Heart left ventricle (tissue), 16 donors: ENCODE measurements at regions of chr20 and their contacts with region 1.

Region 1: DNA sequence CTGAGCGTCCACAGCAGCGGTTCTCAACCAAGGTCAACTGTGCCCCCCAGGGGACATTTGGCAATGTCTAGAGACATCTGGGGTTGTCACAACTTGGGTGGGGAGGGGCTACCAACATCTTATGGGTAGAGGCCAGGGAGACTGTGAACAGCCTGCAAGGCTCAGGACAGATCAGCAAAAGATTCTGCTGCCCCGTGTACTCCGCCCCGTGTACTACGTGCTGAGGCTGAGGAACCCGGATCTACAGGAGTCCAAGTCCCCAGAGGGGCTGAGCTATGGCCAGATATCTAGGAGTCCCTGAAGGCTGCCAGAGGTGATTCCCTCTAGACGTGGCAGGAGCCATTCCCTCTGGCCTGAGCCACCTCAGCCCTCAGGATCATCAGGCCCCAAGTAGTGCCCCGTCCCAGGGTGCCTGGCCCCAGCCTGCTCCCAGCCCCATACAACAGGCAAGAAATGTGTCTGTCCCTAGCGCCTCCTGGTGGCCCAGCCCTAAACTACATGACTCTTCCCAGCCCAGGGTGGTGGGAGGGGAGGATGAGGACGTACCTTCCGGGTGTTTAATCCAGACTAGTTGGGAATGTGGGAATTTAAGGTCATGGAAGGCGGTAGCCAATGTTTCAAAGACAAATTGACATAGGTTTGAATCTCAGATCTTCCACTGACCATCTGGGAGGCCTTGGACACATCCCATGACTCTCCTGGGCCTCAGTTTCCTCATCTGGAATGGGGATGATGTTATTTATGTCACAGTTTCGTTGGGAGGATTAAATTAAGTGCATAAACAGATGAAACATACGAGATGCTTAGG is 49.5 kb upstream of the PTPN1 start:
- DNase-seq: peak; percentile 84 to 93 (median 89)
- ATAC-seq: peak; percentile 85 to 91 (median 89)
- H3K4me3 ChIP-seq: no peak overlapping the region
- H3K27ac ChIP-seq: peak overlapping the region in 8 of 12 donors; percentile 0 to 79 (median 54)
- H3K4me1 ChIP-seq: peaks cover 0 to 41% (median 18%) of the 10 kb centered on the region in 12 donors
- H3K27me3 ChIP-seq: no peaks in the 10 kb centered on the region
- CTCF ChIP-seq: peak; percentile 86 to 96 (median 92)
- POLR2A ChIP-seq: peak in 1 of 2 donors; percentile 36

Region 2: DNA sequence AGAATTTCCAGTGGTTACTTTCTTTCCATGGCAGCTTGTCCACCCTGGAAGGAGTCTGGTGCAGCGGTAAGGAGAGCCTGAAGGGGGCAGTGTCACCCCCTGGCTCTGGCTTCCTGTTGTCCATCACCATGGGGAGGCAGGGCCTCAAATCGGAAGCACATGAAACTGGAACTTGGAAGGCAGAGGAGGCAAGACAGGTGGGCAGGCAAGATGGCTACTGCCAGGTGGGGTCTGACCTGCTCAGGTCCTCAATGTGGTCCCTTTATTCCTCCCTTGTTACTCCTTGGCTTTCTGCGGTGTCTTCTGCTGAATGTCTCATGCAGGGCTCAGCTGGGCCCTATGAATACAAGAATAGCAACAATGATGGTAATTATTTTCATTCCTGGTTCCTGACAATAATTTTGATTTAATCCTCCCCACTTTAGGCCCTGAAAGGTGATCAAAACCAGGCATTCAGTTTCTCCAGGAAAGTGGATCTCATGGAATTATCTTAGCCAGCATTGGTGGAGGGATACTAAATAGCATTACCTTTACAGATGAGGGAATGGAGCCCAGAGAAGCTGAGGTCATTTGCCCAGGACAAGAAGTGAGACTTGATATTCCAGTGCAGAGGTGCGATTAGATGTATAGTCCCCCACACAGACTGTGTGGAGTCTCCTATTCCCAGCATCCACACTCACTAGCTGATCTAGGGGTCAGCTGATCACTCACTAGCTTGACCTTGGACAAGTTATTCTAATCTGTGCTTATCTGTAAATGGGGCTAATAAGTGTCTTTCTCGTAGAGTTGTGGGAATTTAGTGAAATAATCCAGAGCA is 495.5 kb before region 1 on chr20:
- intact Hi-C with region 1: loop called in 1 of 10 experiments (anchors 10 kb)
- DNase-seq: peak in 2 of 5 donors; percentile 29 to 34
- ATAC-seq: no peak
- H3K4me3 ChIP-seq: no peak overlapping the region
- H3K27ac ChIP-seq: no peak overlapping the region
- H3K4me1 ChIP-seq: peaks cover 0 to 18% (median 5%) of the 10 kb centered on the region in 12 donors
- H3K27me3 ChIP-seq: no peaks in the 10 kb centered on the region
- CTCF ChIP-seq: peak; percentile 16 to 60 (median 37)
- POLR2A ChIP-seq: no peak

Region 3: GRCh38 chr20:50115591-50116372 is 344.9 kb before region 1 on chr20:
- intact Hi-C with region 1: loop called in 1 of 10 experiments (anchors 10 kb)
- DNase-seq: peak; percentile 97 to 99 (median 98)
- ATAC-seq: peak; percentile 87 to 94 (median 89)
- H3K4me3 ChIP-seq: peak overlapping the region; percentile 30 to 67 (median 56)
- H3K27ac ChIP-seq: peak overlapping the region; percentile 18 to 86 (median 78)
- H3K4me1 ChIP-seq: peaks cover 11 to 50% (median 34%) of the 10 kb centered on the region in 12 donors
- H3K27me3 ChIP-seq: no peaks in the 10 kb centered on the region
- CTCF ChIP-seq: no peak
- POLR2A ChIP-seq: peak in 1 of 2 donors; percentile 61

Region 4: GRCh38 chr20:50278674-50279531 is 181.8 kb before region 1 on chr20:
- intact Hi-C with region 1: loop called in 4 of 10 experiments (anchors 5 to 10 kb)
- DNase-seq: peak; percentile 73 to 93 (median 88)
- ATAC-seq: peak; percentile 83 to 91 (median 87)
- H3K4me3 ChIP-seq: peak overlapping the region in 1 of 12 donors; percentile 23
- H3K27ac ChIP-seq: peak overlapping the region; percentile 38 to 94 (median 76)
- H3K4me1 ChIP-seq: peaks cover 0 to 89% (median 17%) of the 10 kb centered on the region in 12 donors
- H3K27me3 ChIP-seq: no peaks in the 10 kb centered on the region
- CTCF ChIP-seq: peak in 11 of 12 donors; percentile 12 to 57 (median 39)
- POLR2A ChIP-seq: no peak

Region 5: GRCh38 chr20:50379049-50379990 is 81.3 kb before region 1 on chr20:
- intact Hi-C with region 1: loop called in 3 of 10 experiments (anchors 5 kb)
- DNase-seq: peak; percentile 89 to 95 (median 91)
- ATAC-seq: peak; percentile 79 to 91 (median 88)
- H3K4me3 ChIP-seq: peak overlapping the region in 10 of 12 donors; percentile 12 to 45 (median 25)
- H3K27ac ChIP-seq: peak overlapping the region; percentile 76 to 88 (median 82)
- H3K4me1 ChIP-seq: peaks cover 9 to 58% (median 22%) of the 10 kb centered on the region in 12 donors
- H3K27me3 ChIP-seq: no peaks in the 10 kb centered on the region
- CTCF ChIP-seq: no peak
- POLR2A ChIP-seq: peak in 1 of 2 donors; percentile 64

Region 6: GRCh38 chr20:50403565-50404426 is 56.9 kb before region 1 on chr20:
- intact Hi-C with region 1: loop called (anchors 2 to 10 kb)
- DNase-seq: no peak
- ATAC-seq: no peak
- H3K4me3 ChIP-seq: no peak overlapping the region
- H3K27ac ChIP-seq: peak overlapping the region in 4 of 12 donors; percentile 5 to 66 (median 45)
- H3K4me1 ChIP-seq: peaks cover 2 to 54% (median 21%) of the 10 kb centered on the region in 12 donors
- H3K27me3 ChIP-seq: no peaks in the 10 kb centered on the region
- CTCF ChIP-seq: no peak
- POLR2A ChIP-seq: no peak

Region 7: DNA sequence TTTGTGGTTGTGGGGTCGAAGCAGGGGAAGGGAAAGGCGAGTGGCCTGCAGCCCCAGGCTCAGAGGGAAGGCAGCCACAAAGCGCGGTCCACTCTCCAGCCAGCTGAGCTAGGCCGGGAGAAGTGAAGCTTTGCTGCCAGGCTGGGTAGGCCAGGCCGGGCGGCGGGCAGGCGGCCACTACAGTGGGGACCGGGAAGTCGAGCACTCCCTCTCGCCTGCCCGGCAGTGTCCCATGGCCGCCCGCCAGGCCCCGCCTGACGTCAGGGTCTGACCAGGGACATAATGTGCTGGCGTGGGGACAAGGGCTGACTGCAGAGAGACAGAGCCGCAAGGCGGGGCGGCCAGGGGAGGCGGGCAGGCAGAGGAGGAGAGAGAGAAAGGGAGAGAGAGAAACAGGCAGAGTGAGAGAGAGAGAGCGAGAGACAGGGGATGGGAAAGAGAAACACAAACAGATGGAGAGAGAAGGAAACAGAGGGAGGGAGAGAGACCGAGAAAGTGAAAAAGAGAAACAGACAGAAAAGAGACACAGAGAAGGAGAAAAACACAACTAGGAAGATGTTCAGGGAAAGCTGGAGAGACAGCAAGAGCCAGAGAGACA is 45.0 kb before region 1 on chr20:
- intact Hi-C with region 1: loop called in 1 of 10 experiments (anchors 5 kb)
- DNase-seq: peak; percentile 98 to 100 (median 99)
- ATAC-seq: peak; percentile 97 to 99 (median 98)
- H3K4me3 ChIP-seq: peak overlapping the region in 3 of 12 donors; percentile 18 to 28 (median 27)
- H3K27ac ChIP-seq: peak overlapping the region; percentile 88 to 99 (median 96)
- H3K4me1 ChIP-seq: peaks cover 15 to 43% (median 26%) of the 10 kb centered on the region in 12 donors
- H3K27me3 ChIP-seq: no peaks in the 10 kb centered on the region
- CTCF ChIP-seq: no peak
- POLR2A ChIP-seq: peak in 1 of 2 donors; percentile 81